Right cardiac atrium (tissue), 5 donors: ENCODE measurements at regions of chr19 and their contacts with region 1.

Region 1: GRCh38 chr19:45569619-45570421 is 14.8 kb downstream of the OPA3 start:
- DNase-seq: peak in 2 of 3 donors; percentile 71 to 80
- ATAC-seq: peak; percentile 53 to 55
- H3K4me3 ChIP-seq: no peak overlapping the region
- H3K27ac ChIP-seq: peak overlapping the region; percentile 64
- H3K4me1 ChIP-seq: peaks cover 5% of the 10 kb centered on the region
- H3K27me3 ChIP-seq: no peaks in the 10 kb centered on the region

Region 2: GRCh38 chr19:45523642-45524256 is 46.1 kb before region 1 on chr19:
- intact Hi-C with region 1: loop called in 2 of 4 experiments (anchors 2 to 10 kb)
- DNase-seq: peak; percentile 68 to 88 (median 87)
- ATAC-seq: peak; percentile 90 to 95
- H3K4me3 ChIP-seq: no peak overlapping the region
- H3K27ac ChIP-seq: peak overlapping the region; percentile 68
- H3K4me1 ChIP-seq: no peaks in the 10 kb centered on the region
- H3K27me3 ChIP-seq: no peaks in the 10 kb centered on the region